A549 (cell line): ENCODE measurements at regions of chr1 and their contacts with region 1.

Region 1: GRCh38 chr1:115980998-115981993 is 5.0 kb downstream of the SLC22A15 start:
- DNase-seq: peak; percentile 25 to 34
- ATAC-seq: peak; percentile 36 to 80; a peak in 3 of 6 replicates
- H3K4me3 ChIP-seq: no peak overlapping the region
- H3K27ac ChIP-seq: no peak overlapping the region
- H3K4me1 ChIP-seq: peaks cover 13% of the 10 kb centered on the region; the same call in 2 of the 3 replicates
- CTCF ChIP-seq: peak; percentile 58
- EP300 ChIP-seq: no peak
- POLR2A ChIP-seq: no peak
- RAD21 ChIP-seq: peak; percentile 68 to 70

Region 2: GRCh38 chr1:115807723-115808122 is 173.6 kb before region 1 on chr1:
- CTCF ChIA-PET with region 1: interaction called, 11 read pairs
- POLR2A ChIA-PET with region 1: no interaction called
- DNase-seq: peak; percentile 29 to 67
- ATAC-seq: peak; percentile 64 to 78; a peak in 5 of 6 replicates
- H3K4me3 ChIP-seq: no peak overlapping the region
- H3K27ac ChIP-seq: no peak overlapping the region
- H3K4me1 ChIP-seq: no peaks in the 10 kb centered on the region
- CTCF ChIP-seq: peak; percentile 56
- EP300 ChIP-seq: no peak
- POLR2A ChIP-seq: no peak
- RAD21 ChIP-seq: peak; percentile 52

Region 3: DNA sequence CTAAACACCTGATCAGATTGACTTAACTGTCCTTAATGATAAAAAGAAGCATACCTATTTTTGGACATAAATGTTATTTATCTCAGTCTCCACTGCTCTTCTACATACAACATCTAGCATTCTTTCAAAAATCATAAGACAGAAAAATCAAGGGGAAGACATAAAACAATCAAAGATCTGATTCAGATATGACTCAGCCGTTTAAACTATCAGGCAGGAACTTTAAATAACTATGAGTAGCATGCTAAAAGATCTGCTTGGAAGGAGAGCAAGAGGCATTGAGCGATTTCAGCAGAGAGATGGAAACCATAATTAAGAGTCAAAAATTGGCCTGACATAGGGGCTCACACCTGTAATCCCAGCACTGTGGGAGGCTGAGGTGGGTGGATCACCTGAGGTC is 32.1 kb before region 1 on chr1:
- CTCF ChIA-PET with region 1: no interaction called
- POLR2A ChIA-PET with region 1: no interaction called
- DNase-seq: no peak
- ATAC-seq: no peak
- H3K4me3 ChIP-seq: no peak overlapping the region
- H3K27ac ChIP-seq: no peak overlapping the region
- H3K4me1 ChIP-seq: no peaks in the 10 kb centered on the region
- CTCF ChIP-seq: no peak
- EP300 ChIP-seq: no peak
- POLR2A ChIP-seq: no peak
- RAD21 ChIP-seq: no peak

Region 4: GRCh38 chr1:115991909-115992308 is 10.6 kb after region 1 on chr1:
- CTCF ChIA-PET with region 1: interaction called, 12 read pairs
- POLR2A ChIA-PET with region 1: no interaction called
- DNase-seq: no peak
- ATAC-seq: no peak
- H3K4me3 ChIP-seq: no peak overlapping the region
- H3K27ac ChIP-seq: no peak overlapping the region
- H3K4me1 ChIP-seq: no peaks in the 10 kb centered on the region
- CTCF ChIP-seq: no peak
- EP300 ChIP-seq: no peak
- POLR2A ChIP-seq: no peak
- RAD21 ChIP-seq: no peak

Region 5: GRCh38 chr1:116104667-116105205 is 123.4 kb after region 1 on chr1:
- CTCF ChIA-PET with region 1: no interaction called
- POLR2A ChIA-PET with region 1: no interaction called
- DNase-seq: no peak
- ATAC-seq: no peak
- H3K4me3 ChIP-seq: no peak overlapping the region
- H3K27ac ChIP-seq: no peak overlapping the region
- H3K4me1 ChIP-seq: peaks cover 6% of the 10 kb centered on the region
- CTCF ChIP-seq: no peak
- EP300 ChIP-seq: no peak
- POLR2A ChIP-seq: no peak
- RAD21 ChIP-seq: no peak

Region 6: GRCh38 chr1:116472431-116472961 is 491.2 kb after region 1 on chr1:
- CTCF ChIA-PET with region 1: no interaction called
- POLR2A ChIA-PET with region 1: no interaction called
- DNase-seq: no peak
- ATAC-seq: no peak
- H3K4me3 ChIP-seq: no peak overlapping the region
- H3K27ac ChIP-seq: 0 out of 6 replicates have a peak overlapping the region, but pooled peaks of 1 of the 2 experiments have one; percentile 27
- H3K4me1 ChIP-seq: peaks cover 30% of the 10 kb centered on the region
- CTCF ChIP-seq: no peak
- EP300 ChIP-seq: no peak
- POLR2A ChIP-seq: no peak
- RAD21 ChIP-seq: no peak